Caco-2 (cell line): ENCODE measurements at regions of chr1 and their contacts with region 1.

Region 1: DNA sequence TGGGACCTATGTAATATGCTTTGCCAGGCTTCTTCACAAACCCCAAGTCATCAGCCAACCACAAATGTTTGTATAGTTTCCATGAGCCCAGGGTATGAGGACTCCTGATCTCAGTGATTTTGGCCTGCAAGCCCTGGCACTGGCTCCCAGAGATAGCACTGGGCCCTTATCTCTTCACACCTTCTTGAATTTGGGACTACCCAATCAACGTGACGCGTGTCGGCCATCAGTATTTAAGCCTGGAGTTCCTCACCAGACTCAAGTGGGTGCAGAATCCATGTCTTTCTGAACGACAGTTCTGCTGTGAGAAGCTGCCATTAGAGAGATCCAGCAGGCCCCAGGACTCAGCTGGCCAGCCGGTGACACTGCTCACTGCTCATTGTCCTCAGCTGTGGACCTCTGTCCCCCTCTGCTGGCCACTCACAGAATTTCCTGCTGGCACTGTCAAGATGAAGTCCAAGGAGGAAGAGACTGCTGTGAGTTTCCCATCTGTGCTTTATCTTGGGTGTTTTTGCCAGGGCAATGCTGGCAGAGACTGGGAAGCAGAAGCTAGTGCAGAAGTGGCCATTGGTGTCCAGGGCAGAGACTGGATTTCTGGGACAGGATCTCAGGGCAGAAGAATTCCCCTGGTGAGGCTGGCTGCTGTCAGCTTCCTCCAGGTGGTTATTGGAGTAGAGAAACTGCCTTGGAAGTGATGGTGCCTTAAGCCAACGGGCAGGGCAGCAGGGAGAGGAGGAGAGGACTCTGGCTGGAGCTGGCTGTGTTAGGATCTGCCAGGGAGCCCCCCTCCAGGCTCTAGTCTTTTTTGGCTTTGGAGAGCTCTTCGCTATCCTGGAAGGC is 28.4 kb downstream of the TMCC2 start:
- DNase-seq: peak; percentile 83 to 90
- H3K4me3 ChIP-seq: no peak overlapping the region
- H3K4me3 Mint-ChIP-seq: no peak overlapping the region
- H3K27ac Mint-ChIP-seq: no peak overlapping the region
- H3K4me1 ChIP-seq: no peaks in the 10 kb centered on the region
- H3K4me1 Mint-ChIP-seq: no peaks in the 10 kb centered on the region
- H3K27me3 ChIP-seq: no peaks in the 10 kb centered on the region
- H3K27me3 Mint-ChIP-seq: no peaks in the 10 kb centered on the region
- CTCF ChIP-seq: peak; percentile 87 to 95

Region 2: GRCh38 chr1:204975570-204976235 is 280.5 kb before region 1 on chr1:
- CTCF ChIA-PET with region 1: interaction called, 8 read pairs
- POLR2A ChIA-PET with region 1: no interaction called
- intact Hi-C with region 1: loop called (anchors 1 kb)
- DNase-seq: peak; percentile 62 to 77
- H3K4me3 ChIP-seq: no peak overlapping the region
- H3K4me3 Mint-ChIP-seq: no peak overlapping the region
- H3K27ac Mint-ChIP-seq: no peak overlapping the region
- H3K4me1 ChIP-seq: no peaks in the 10 kb centered on the region
- H3K4me1 Mint-ChIP-seq: no peaks in the 10 kb centered on the region
- H3K27me3 ChIP-seq: no peaks in the 10 kb centered on the region
- H3K27me3 Mint-ChIP-seq: peaks cover 11% of the 10 kb centered on the region
- CTCF ChIP-seq: peak; percentile 88 to 89

Region 3: GRCh38 chr1:204989266-204990058 is 266.7 kb before region 1 on chr1:
- CTCF ChIA-PET with region 1: interaction called, 6 read pairs
- POLR2A ChIA-PET with region 1: no interaction called
- intact Hi-C with region 1: loop called (anchors 1 kb)
- DNase-seq: peak; percentile 61 to 76
- H3K4me3 ChIP-seq: no peak overlapping the region
- H3K4me3 Mint-ChIP-seq: no peak overlapping the region
- H3K27ac Mint-ChIP-seq: no peak overlapping the region
- H3K4me1 ChIP-seq: no peaks in the 10 kb centered on the region
- H3K4me1 Mint-ChIP-seq: no peaks in the 10 kb centered on the region
- H3K27me3 ChIP-seq: no peaks in the 10 kb centered on the region; the same call in 1 of the 2 replicates
- H3K27me3 Mint-ChIP-seq: peaks cover 22% of the 10 kb centered on the region
- CTCF ChIP-seq: peak; percentile 94 to 97

Region 4: DNA sequence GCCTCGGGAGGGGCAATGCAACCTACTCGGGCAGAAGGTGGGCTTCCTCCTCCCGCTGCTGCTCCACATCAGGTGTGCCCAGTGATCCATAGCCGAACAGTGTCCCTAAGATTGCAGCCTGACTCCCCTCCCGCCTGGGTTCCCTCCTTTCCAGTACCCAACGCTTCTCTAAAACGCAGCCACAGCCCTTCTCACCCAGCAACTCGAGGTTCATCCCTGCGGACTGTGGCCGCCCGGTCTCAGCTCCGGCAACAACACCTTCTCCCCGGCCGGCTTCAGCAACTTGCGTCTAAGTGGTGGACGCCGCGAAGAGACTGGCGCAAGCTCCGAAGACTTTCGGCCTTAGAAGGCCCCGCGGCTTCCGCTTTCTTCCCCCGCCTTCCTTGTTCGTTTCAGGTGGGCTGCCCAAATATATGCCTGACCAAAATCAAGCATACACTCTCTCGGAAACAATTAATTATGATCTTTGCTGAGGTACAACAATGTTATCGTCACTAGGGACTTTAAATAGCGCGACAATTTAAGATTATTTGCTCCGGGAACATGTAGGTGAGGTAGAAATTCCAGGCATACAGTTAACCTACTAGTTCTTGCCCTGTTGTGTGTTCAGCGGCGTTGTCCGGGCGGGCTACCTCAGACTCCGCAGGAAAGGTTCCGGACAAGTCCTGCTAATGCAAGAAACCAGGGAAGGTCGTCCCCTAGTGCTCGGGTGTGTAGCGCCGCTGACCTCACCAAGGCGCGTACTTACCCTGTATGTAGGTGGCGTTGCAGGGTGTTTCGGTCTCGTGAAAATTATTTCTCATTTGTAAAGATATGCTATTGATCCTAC is 134.3 kb before region 1 on chr1 and contains the start of gene RBBP5:
- CTCF ChIA-PET with region 1: no interaction called
- POLR2A ChIA-PET with region 1: no interaction called
- intact Hi-C with region 1: loop called (anchors 1 kb)
- DNase-seq: peak; percentile 97
- H3K4me3 ChIP-seq: peak within 1 kb of the TSS; percentile 85
- H3K4me3 Mint-ChIP-seq: peak within 1 kb of the TSS; percentile 96
- H3K27ac Mint-ChIP-seq: peak within 1 kb of the TSS; percentile 98
- H3K4me1 ChIP-seq: peaks cover 4% of the 10 kb centered on the region
- H3K4me1 Mint-ChIP-seq: peaks cover 11% of the 10 kb centered on the region
- H3K27me3 ChIP-seq: no peaks in the 10 kb centered on the region
- H3K27me3 Mint-ChIP-seq: no peaks in the 10 kb centered on the region
- CTCF ChIP-seq: peak; percentile 34 to 94
- total RNA-seq, gene RBBP5: 17.9 and 19.0 TPM in 2 replicates

Region 5: DNA sequence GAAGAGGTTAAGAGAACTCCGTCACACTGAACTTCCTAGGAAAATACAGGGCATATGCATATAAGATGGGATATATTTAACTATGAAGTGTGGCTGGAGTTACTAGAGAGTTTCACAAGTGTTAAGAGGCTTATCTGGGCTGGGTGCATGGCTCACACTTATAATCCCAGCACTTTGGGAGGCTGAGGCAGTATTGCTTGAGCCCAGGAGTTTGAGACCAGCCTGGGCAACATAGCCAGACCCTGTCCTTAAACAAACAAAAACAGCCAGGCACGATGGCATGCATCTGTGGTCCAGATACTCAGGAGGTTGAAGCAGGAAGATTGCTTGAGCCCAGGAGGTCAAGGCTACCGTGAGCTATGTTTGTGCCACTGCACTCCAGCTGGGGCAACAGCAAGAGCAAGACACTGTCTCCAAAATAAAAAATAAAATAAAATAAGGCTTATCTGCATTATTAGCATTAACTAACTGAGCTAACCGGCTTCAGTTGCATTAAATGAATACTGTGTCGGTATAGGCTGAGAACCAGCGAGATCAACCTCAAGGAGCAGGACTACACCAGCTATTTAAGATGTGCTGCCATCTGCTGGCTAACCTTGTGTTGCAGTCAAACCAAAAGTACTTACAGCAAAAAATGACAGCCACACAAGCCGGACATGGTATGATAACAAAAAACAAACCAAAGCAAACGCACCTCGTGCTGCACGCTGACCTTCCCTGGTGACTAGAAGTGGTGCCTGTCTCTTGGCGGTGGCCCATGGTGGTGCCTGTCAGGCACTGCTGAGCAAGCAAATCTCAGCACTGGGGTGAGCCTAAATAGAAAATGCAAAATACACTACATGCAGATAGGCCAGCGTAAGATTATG is 114.7 kb before region 1 on chr1:
- CTCF ChIA-PET with region 1: interaction called, 9 read pairs
- POLR2A ChIA-PET with region 1: no interaction called
- intact Hi-C with region 1: loop called (anchors 1 kb)
- DNase-seq: peak; percentile 56 to 72
- H3K4me3 ChIP-seq: no peak overlapping the region
- H3K4me3 Mint-ChIP-seq: no peak overlapping the region
- H3K27ac Mint-ChIP-seq: no peak overlapping the region
- H3K4me1 ChIP-seq: peaks cover 15% of the 10 kb centered on the region
- H3K4me1 Mint-ChIP-seq: peaks cover 11% of the 10 kb centered on the region
- H3K27me3 ChIP-seq: no peaks in the 10 kb centered on the region
- H3K27me3 Mint-ChIP-seq: no peaks in the 10 kb centered on the region
- CTCF ChIP-seq: peak; percentile 66 to 67

Region 6: GRCh38 chr1:205227584-205228006 is 28.6 kb before region 1 on chr1 and contains the start of gene TMCC2:
- CTCF ChIA-PET with region 1: interaction called, 57 read pairs
- POLR2A ChIA-PET with region 1: no interaction called
- intact Hi-C with region 1: loop called (anchors 1 kb)
- DNase-seq: peak; percentile 85 to 87
- H3K4me3 ChIP-seq: peak within 1 kb of the TSS; percentile 66
- H3K4me3 Mint-ChIP-seq: peak within 1 kb of the TSS; percentile 83
- H3K27ac Mint-ChIP-seq: no peak within 1 kb of the TSS
- H3K4me1 ChIP-seq: no peaks in the 10 kb centered on the region
- H3K4me1 Mint-ChIP-seq: peaks cover 7% of the 10 kb centered on the region
- H3K27me3 ChIP-seq: no peaks in the 10 kb centered on the region; the same call in 1 of the 2 replicates
- H3K27me3 Mint-ChIP-seq: peaks cover 5% of the 10 kb centered on the region
- CTCF ChIP-seq: no peak
- total RNA-seq, gene TMCC2: 0.60 and 0.91 TPM in 2 replicates

Region 7: DNA sequence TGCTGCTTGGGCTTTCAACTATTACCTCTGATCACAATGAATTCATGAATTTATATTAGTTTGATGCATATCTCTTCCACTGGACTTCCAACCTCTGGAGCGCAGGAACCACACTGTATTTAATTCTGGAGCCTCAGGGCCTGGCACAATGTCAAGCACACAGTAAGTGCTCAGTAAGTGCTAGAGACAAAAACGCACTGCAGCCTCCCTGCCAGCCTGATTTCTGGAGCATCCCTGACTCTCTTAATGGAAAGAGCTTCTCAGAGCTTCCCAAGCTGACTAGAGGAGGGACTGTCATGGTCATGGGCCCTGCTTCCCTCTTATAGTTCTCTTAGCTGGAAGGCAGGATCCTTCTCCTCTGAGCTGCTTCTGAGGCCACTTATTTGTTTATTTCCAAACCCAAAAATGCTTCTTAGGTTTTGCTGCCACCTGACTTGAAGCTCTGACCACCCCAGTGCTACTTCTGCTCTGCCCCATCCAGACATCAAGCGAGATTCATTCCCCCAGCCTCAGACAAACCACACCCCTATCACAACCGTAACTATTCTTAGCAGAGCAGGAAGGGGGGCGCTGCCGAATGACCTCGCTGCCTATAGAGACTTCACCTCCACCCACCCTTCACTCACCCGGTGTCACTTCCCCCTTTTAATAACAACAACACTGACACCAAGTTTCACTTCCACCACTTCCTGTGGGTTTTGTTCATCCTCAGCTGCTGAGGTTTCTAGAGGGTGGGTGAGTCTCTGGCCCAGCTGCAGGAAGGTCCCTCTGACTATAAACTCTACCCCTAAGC is 31.8 kb after region 1 on chr1:
- CTCF ChIA-PET with region 1: no interaction called
- POLR2A ChIA-PET with region 1: no interaction called
- intact Hi-C with region 1: no loop called
- DNase-seq: no peak
- H3K4me3 ChIP-seq: no peak overlapping the region
- H3K4me3 Mint-ChIP-seq: no peak overlapping the region
- H3K27ac Mint-ChIP-seq: peak overlapping the region; percentile 33
- H3K4me1 ChIP-seq: peaks cover 51% of the 10 kb centered on the region
- H3K4me1 Mint-ChIP-seq: peaks cover 46% of the 10 kb centered on the region
- H3K27me3 ChIP-seq: no peaks in the 10 kb centered on the region
- H3K27me3 Mint-ChIP-seq: no peaks in the 10 kb centered on the region
- CTCF ChIP-seq: no peak